HepG2 (cell line): ENCODE measurements at regions of chr20 and their contacts with region 1.

Region 1: GRCh38 chr20:32819992-32820710 is 397 bp downstream of the MAPRE1 start:
- DNase-seq: peak; percentile 72
- ATAC-seq: peak; percentile 86
- H3K4me3 ChIP-seq: peak overlapping the region; percentile 80 to 98 (median 92)
- H3K27ac ChIP-seq: peak overlapping the region; percentile 72
- H3K4me1 ChIP-seq: peaks cover 60% of the 10 kb centered on the region
- H3K27me3 ChIP-seq: peaks cover 0 to 4% of the 10 kb centered on the region in 2 experiments; a peak in 1 of 5 replicates
- CTCF ChIP-seq: peak; percentile 22; the same call in 1 of the 2 replicates
- EP300 ChIP-seq: no peak
- POLR2A ChIP-seq: peak; percentile 83 to 95
- RAD21 ChIP-seq: peak; percentile 35

Region 2: GRCh38 chr20:32731393-32732266 is 88.5 kb before region 1 on chr20:
- CTCF ChIA-PET with region 1: no interaction called
- POLR2A ChIA-PET with region 1: no interaction called
- in situ Hi-C with region 1: no loop called
- intact Hi-C with region 1: no loop called
- DNase-seq: peak; percentile 89
- ATAC-seq: peak; percentile 88
- H3K4me3 ChIP-seq: no peak overlapping the region
- H3K27ac ChIP-seq: peak overlapping the region; percentile 32
- H3K4me1 ChIP-seq: peaks cover 16% of the 10 kb centered on the region
- H3K27me3 ChIP-seq: no peaks in the 10 kb centered on the region
- CTCF ChIP-seq: 0 out of 2 replicates have a peak, but pooled peaks have one; percentile 14
- EP300 ChIP-seq: peak in 1 of 2 experiments; percentile 77; a peak in 1 of 4 replicates
- POLR2A ChIP-seq: peak in 1 of 2 experiments; percentile 32; a peak in 1 of 4 replicates
- RAD21 ChIP-seq: peak; percentile 37; the same call in 1 of the 2 replicates

Region 3: DNA sequence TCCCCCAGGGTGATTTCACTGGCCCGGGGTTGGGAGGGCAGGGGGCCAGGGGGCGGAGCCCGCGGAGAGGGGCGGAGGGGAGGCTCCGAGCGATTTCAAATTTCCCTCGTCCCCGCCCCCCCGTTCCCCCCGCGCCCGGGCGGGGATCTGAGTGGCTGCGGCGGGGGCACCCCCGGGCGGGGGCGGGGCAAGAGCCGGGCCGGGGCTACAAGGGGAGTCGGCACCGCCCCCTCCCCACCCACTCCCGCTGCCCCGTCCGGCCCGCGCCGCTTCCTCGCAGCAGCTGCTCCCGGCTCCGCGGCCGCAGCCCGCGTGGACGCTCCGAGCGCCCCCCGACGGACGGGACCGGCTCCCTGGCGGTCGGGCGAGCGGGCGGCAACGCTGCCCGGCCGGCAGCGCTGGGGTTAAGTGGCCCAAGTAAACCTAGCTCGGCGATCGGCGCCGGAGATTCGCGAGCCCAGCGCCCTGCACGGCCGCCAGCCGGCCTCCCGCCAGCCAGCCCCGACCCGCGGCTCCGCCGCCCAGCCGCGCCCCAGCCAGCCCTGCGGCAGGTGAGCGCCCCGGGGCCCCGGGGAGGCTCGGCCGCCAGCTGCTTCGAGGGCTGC is 57.9 kb before region 1 on chr20 and contains the start of gene DNMT3B:
- CTCF ChIA-PET with region 1: no interaction called
- POLR2A ChIA-PET with region 1: interaction called, 6 read pairs
- in situ Hi-C with region 1: no loop called
- intact Hi-C with region 1: loop called (anchors 2 kb)
- DNase-seq: peak; percentile 60
- ATAC-seq: peak; percentile 79
- H3K4me3 ChIP-seq: peak within 1 kb of the TSS; percentile 75 to 95 (median 95)
- H3K27ac ChIP-seq: peak within 1 kb of the TSS; percentile 24
- H3K4me1 ChIP-seq: peaks cover 62% of the 10 kb centered on the region
- H3K27me3 ChIP-seq: no peaks in the 10 kb centered on the region; a peak in 1 of 5 replicates
- CTCF ChIP-seq: peak; percentile 49; the same call in 1 of the 2 replicates
- EP300 ChIP-seq: no peak
- POLR2A ChIP-seq: peak; percentile 25 to 76; a peak in 2 of 4 replicates
- RAD21 ChIP-seq: peak; percentile 95
- total RNA-seq, gene DNMT3B: 13.2 and 13.9 TPM in 2 replicates

Region 4: DNA sequence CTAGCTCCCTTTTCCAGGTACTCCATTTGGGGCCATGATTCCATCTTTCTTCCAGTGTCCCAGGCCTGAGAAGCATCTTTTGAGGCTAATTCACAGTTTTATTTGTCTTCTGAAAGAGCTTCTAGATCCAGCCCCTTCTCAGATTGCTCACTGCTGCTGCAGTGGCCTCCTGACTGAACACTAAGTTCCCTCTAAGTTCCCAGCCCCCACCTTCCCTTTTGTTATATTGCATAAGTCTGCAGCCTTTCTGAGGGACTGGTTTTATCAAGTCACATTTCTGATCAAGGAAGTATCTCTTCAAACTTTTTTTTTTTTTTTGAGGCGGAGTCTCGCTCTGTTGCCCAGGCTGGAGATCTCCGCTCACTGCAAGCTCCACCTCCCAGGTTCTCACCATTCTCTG is 10.3 kb after region 1 on chr20:
- CTCF ChIA-PET with region 1: no interaction called
- POLR2A ChIA-PET with region 1: interaction called, 16 read pairs
- in situ Hi-C with region 1: no loop called
- intact Hi-C with region 1: no loop called
- DNase-seq: no peak
- ATAC-seq: no peak
- H3K4me3 ChIP-seq: no peak overlapping the region
- H3K27ac ChIP-seq: no peak overlapping the region
- H3K4me1 ChIP-seq: no peaks in the 10 kb centered on the region
- H3K27me3 ChIP-seq: no peaks in the 10 kb centered on the region
- CTCF ChIP-seq: no peak
- EP300 ChIP-seq: no peak
- POLR2A ChIP-seq: no peak
- RAD21 ChIP-seq: no peak

Region 5: DNA sequence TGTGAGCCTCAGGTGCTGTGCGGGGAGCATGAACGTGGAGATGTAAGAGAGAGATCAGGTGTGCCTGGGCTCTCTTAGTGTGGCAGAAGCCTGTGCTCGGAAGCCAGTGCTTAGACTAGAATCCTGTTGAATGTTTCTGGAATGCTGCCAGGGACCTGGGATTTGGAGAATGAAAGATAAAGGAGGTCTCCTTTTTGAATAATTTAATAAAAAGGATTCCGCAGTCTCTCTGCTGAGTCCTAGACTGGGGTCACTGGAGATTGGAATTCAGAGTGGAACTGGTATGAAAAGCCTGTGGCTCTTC is 19.8 kb after region 1 on chr20:
- CTCF ChIA-PET with region 1: no interaction called
- POLR2A ChIA-PET with region 1: interaction called, 3 read pairs
- in situ Hi-C with region 1: no loop called
- intact Hi-C with region 1: loop called (anchors 2 kb)
- DNase-seq: no peak
- ATAC-seq: no peak
- H3K4me3 ChIP-seq: no peak overlapping the region
- H3K27ac ChIP-seq: no peak overlapping the region
- H3K4me1 ChIP-seq: peaks cover 9% of the 10 kb centered on the region
- H3K27me3 ChIP-seq: no peaks in the 10 kb centered on the region
- CTCF ChIP-seq: no peak
- EP300 ChIP-seq: no peak
- POLR2A ChIP-seq: no peak
- RAD21 ChIP-seq: no peak

Region 6: GRCh38 chr20:33373735-33374605 is 553.8 kb after region 1 on chr20:
- CTCF ChIA-PET with region 1: no interaction called
- POLR2A ChIA-PET with region 1: interaction called, 11 read pairs
- in situ Hi-C with region 1: no loop called
- intact Hi-C with region 1: no loop called
- DNase-seq: peak; percentile 99
- ATAC-seq: peak; percentile 96
- H3K4me3 ChIP-seq: no peak overlapping the region; a peak in 1 of 6 replicates
- H3K27ac ChIP-seq: peak overlapping the region; percentile 70
- H3K4me1 ChIP-seq: peaks cover 38% of the 10 kb centered on the region
- H3K27me3 ChIP-seq: no peaks in the 10 kb centered on the region
- CTCF ChIP-seq: no peak
- EP300 ChIP-seq: peak; percentile 56 to 94
- POLR2A ChIP-seq: no peak
- RAD21 ChIP-seq: no peak; the same call in 1 of the 2 replicates